ENCODE measurements at regions of chr5 and their contacts with region 1.

Region 1: DNA sequence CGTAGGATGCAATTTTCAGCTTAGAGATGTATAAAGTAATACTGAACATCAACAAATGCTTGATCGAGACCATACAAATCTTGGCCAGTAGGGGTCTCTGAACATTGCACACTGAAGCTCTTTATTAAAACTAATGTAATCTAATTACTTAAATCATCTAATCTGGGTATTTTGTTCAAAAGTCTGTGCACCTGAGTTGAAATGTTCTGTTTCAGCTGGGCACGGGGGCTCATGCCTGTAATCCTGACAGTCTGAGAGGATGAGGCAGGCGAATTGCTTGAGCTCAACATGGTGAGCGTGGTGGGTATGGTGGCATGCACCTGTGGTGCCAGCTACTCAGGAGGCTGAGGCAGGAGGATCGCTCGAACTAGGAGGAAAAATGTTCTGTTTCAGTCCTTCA is 41.0 kb downstream of the ESM1 start:
- DNase-seq: peak; percentile 75
- H3K4me3 ChIP-seq: no peak overlapping the region
- H3K27ac ChIP-seq: no peak overlapping the region
- H3K4me1 ChIP-seq: peaks cover 10% of the 10 kb centered on the region
- H3K27me3 ChIP-seq: no peaks in the 10 kb centered on the region
- CTCF ChIP-seq: peak; percentile 44 to 55
- POLR2A ChIP-seq: no peak

Region 2: GRCh38 chr5:54799645-54800044 is 144.7 kb before region 1 on chr5:
- CTCF ChIA-PET with region 1: no interaction called
- POLR2A ChIA-PET with region 1: no interaction called
- dilution Hi-C with region 1: no loop called
- intact Hi-C with region 1: no loop called
- DNase-seq: no peak
- H3K4me3 ChIP-seq: no peak overlapping the region
- H3K27ac ChIP-seq: no peak overlapping the region
- H3K4me1 ChIP-seq: no peaks in the 10 kb centered on the region
- H3K27me3 ChIP-seq: no peaks in the 10 kb centered on the region
- CTCF ChIP-seq: no peak
- POLR2A ChIP-seq: no peak

Region 3: GRCh38 chr5:54927097-54927746 is 17.1 kb before region 1 on chr5:
- CTCF ChIA-PET with region 1: interaction called, 24 read pairs
- POLR2A ChIA-PET with region 1: no interaction called
- dilution Hi-C with region 1: no loop called
- intact Hi-C with region 1: no loop called
- DNase-seq: no peak
- H3K4me3 ChIP-seq: no peak overlapping the region
- H3K27ac ChIP-seq: no peak overlapping the region
- H3K4me1 ChIP-seq: no peaks in the 10 kb centered on the region
- H3K27me3 ChIP-seq: peaks cover 11 to 14% of the 10 kb centered on the region in 2 experiments
- CTCF ChIP-seq: no peak
- POLR2A ChIP-seq: no peak

Region 4: DNA sequence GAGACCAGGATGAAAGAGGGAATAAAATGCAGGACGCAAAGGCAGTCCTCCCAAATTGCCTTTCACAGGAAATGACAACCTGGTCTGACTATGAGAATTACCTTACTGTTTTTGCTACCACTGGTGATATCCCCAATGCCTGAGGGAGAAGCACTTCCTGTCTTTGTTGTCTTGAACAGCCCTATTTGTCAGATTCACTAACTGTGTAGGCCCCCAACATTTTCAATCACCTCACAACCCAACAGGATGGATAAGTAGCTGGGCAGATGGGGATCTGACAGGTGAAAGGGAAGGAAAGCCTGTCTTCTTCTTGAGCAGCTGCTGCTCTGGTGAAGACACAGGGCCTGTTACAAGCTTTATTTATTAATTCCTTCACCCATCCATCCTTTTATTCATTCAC is 31.3 kb after region 1 on chr5:
- CTCF ChIA-PET with region 1: interaction called, 115 read pairs
- POLR2A ChIA-PET with region 1: no interaction called
- dilution Hi-C with region 1: no loop called
- intact Hi-C with region 1: loop called (anchors 1 kb)
- DNase-seq: peak; percentile 34
- H3K4me3 ChIP-seq: no peak overlapping the region
- H3K27ac ChIP-seq: no peak overlapping the region
- H3K4me1 ChIP-seq: peaks cover 52% of the 10 kb centered on the region
- H3K27me3 ChIP-seq: no peaks in the 10 kb centered on the region
- CTCF ChIP-seq: no peak
- POLR2A ChIP-seq: peak; percentile 83

Region 5: GRCh38 chr5:55037046-55037771 is 92.8 kb after region 1 on chr5:
- CTCF ChIA-PET with region 1: interaction called, 10 read pairs
- POLR2A ChIA-PET with region 1: no interaction called
- dilution Hi-C with region 1: no loop called
- intact Hi-C with region 1: no loop called
- DNase-seq: peak; percentile 7
- H3K4me3 ChIP-seq: no peak overlapping the region
- H3K27ac ChIP-seq: no peak overlapping the region
- H3K4me1 ChIP-seq: no peaks in the 10 kb centered on the region
- H3K27me3 ChIP-seq: no peaks in the 10 kb centered on the region
- CTCF ChIP-seq: no peak
- POLR2A ChIP-seq: no peak

Region 6: GRCh38 chr5:55151923-55152842 is 207.8 kb after region 1 on chr5:
- CTCF ChIA-PET with region 1: interaction called, 166 read pairs
- POLR2A ChIA-PET with region 1: no interaction called
- dilution Hi-C with region 1: no loop called
- intact Hi-C with region 1: loop called (anchors 1 kb)
- DNase-seq: peak; percentile 40
- H3K4me3 ChIP-seq: no peak overlapping the region
- H3K27ac ChIP-seq: peak overlapping the region; percentile 35
- H3K4me1 ChIP-seq: peaks cover 40% of the 10 kb centered on the region
- H3K27me3 ChIP-seq: no peaks in the 10 kb centered on the region
- CTCF ChIP-seq: no peak
- POLR2A ChIP-seq: no peak

Measured in endothelial cell of umbilical vein (primary cell).